ENCODE measurements at regions of chr3 and their contacts with region 1.

Region 1: DNA sequence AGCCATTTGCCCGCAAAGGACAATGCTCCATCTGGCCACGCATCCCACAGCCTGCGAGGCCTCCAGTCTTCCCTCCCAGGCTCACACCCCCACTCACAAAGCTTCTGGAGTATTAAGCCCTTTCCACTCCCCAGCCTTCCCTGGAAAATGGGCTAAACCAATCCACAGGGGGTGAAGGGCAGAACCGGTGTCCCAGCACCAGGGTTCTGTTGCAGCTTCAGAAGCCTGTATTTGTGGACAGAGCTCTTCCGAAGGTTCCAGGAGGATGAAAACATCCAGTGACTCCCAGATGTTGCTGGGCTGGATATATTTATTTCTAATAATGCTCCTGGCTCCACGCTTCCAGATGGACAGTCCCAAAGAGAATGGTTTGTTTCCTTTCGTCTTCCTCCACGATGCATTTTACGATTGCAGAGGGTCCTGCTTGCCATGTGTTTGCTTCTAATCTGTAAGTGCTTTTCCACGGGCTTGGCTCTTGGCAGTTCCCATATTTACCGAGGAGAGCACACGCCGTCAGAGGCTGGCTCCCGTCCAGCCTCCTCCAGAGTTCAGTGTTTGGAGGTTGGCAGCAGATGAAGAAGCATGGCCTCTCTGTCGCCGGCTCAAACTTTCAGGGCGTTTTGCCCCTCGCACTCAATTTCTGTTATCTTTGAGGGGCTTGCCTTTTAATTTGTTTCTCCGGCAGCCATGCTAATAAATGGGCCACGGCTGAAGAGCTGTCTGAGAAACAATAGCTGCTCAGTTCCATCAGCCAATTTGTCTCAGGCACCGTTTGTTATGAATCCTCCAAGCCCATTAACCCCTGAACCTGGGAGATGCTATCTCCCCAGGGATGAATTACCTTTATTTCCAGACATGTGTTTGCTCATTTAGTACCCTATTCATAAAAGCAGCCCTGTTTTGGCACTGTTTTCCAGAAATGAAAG is 367.9 kb upstream of the PROK2 start:
- DNase-seq: peak; percentile 39
- ATAC-seq: peak; percentile 44
- H3K4me3 ChIP-seq: peak overlapping the region; percentile 66 to 84 (median 79)
- H3K27ac ChIP-seq: peak overlapping the region; percentile 96
- H3K4me1 ChIP-seq: peaks cover 60% of the 10 kb centered on the region
- H3K27me3 ChIP-seq: no peaks in the 10 kb centered on the region; a peak in 1 of 5 replicates
- CTCF ChIP-seq: no peak
- EP300 ChIP-seq: no peak
- POLR2A ChIP-seq: peak; percentile 30 to 58; a peak in 2 of 4 replicates
- RAD21 ChIP-seq: no peak

Region 2: GRCh38 chr3:72109327-72110259 is 43.2 kb before region 1 on chr3:
- CTCF ChIA-PET with region 1: no interaction called
- POLR2A ChIA-PET with region 1: no interaction called
- in situ Hi-C with region 1: no loop called
- intact Hi-C with region 1: no loop called
- DNase-seq: no peak
- ATAC-seq: no peak
- H3K4me3 ChIP-seq: no peak overlapping the region
- H3K27ac ChIP-seq: no peak overlapping the region
- H3K4me1 ChIP-seq: no peaks in the 10 kb centered on the region
- H3K27me3 ChIP-seq: peaks cover 1 to 5% of the 10 kb centered on the region in 2 experiments; a peak in 2 of 5 replicates
- CTCF ChIP-seq: no peak
- EP300 ChIP-seq: no peak
- POLR2A ChIP-seq: no peak
- RAD21 ChIP-seq: no peak

Region 3: GRCh38 chr3:72120806-72121778 is 31.7 kb before region 1 on chr3:
- CTCF ChIA-PET with region 1: no interaction called
- POLR2A ChIA-PET with region 1: no interaction called
- in situ Hi-C with region 1: no loop called
- intact Hi-C with region 1: no loop called
- DNase-seq: no peak
- ATAC-seq: peak; percentile 60
- H3K4me3 ChIP-seq: no peak overlapping the region
- H3K27ac ChIP-seq: no peak overlapping the region
- H3K4me1 ChIP-seq: peaks cover 21% of the 10 kb centered on the region
- H3K27me3 ChIP-seq: no peaks in the 10 kb centered on the region
- CTCF ChIP-seq: no peak
- EP300 ChIP-seq: no peak
- POLR2A ChIP-seq: no peak
- RAD21 ChIP-seq: no peak

Region 4: DNA sequence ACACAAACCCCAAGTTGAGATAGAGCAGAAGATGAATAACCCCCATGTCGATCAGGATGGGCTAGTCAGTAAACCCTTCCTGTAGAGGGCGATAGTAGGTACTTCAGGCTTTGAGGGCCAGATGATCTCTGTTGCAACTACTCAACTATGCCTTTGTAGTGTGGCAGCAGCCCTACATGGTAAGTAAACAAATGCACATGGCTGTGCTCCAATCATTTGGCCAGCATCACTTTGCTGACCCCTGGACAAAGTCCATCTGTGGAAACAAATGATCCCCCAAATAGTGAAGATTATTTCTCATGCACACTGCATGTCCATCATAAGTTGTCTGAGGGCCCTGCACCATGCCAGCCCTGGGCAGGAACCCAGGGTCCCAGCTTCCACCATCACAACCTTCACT is 34.3 kb after region 1 on chr3:
- CTCF ChIA-PET with region 1: no interaction called
- POLR2A ChIA-PET with region 1: interaction called, 3 read pairs
- in situ Hi-C with region 1: no loop called
- intact Hi-C with region 1: loop called (anchors 1 kb)
- DNase-seq: peak; percentile 62
- ATAC-seq: peak; percentile 86
- H3K4me3 ChIP-seq: no peak overlapping the region
- H3K27ac ChIP-seq: no peak overlapping the region
- H3K4me1 ChIP-seq: peaks cover 17% of the 10 kb centered on the region
- H3K27me3 ChIP-seq: no peaks in the 10 kb centered on the region
- CTCF ChIP-seq: peak; percentile 52
- EP300 ChIP-seq: no peak
- POLR2A ChIP-seq: no peak
- RAD21 ChIP-seq: 0 out of 2 replicates have a peak, but pooled peaks have one; percentile 17

Measured in HepG2 (cell line).